Endothelial cell of umbilical vein (primary cell): ENCODE measurements at regions of chr9 and their contacts with region 1.

Region 1: GRCh38 chr9:94783102-94783664 is 56.7 kb downstream of the AOPEP start:
- DNase-seq: peak; percentile 81
- H3K4me3 ChIP-seq: no peak overlapping the region
- H3K27ac ChIP-seq: no peak overlapping the region
- H3K4me1 ChIP-seq: no peaks in the 10 kb centered on the region
- H3K27me3 ChIP-seq: no peaks in the 10 kb centered on the region
- CTCF ChIP-seq: peak; percentile 64 to 65
- POLR2A ChIP-seq: no peak

Region 2: DNA sequence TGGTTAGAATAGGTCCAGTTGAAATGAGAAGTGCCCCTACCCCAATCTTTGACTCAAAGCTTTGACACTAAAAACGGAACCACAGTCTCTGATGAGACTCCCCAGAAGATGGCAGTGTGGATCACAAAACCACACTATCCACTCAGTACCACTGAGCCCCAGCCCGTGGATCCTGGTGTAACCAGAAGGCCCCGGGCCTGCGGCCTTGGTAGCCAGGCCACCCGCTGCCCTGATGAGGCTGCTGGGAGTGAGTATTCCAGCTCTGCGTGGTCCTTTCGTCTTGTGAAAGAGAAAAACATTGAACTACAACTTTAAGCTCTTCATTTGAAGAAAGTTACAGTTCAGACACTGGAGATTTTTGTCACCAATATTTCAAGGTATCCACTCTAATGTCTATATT is 101.7 kb before region 1 on chr9:
- CTCF ChIA-PET with region 1: interaction called, 10 read pairs
- POLR2A ChIA-PET with region 1: no interaction called
- dilution Hi-C with region 1: no loop called
- intact Hi-C with region 1: loop called (anchors 1 kb)
- DNase-seq: peak; percentile 67
- H3K4me3 ChIP-seq: no peak overlapping the region
- H3K27ac ChIP-seq: no peak overlapping the region
- H3K4me1 ChIP-seq: no peaks in the 10 kb centered on the region
- H3K27me3 ChIP-seq: peaks cover 3 to 4% of the 10 kb centered on the region in 2 experiments
- CTCF ChIP-seq: peak; percentile 68 to 74
- POLR2A ChIP-seq: no peak

Region 3: DNA sequence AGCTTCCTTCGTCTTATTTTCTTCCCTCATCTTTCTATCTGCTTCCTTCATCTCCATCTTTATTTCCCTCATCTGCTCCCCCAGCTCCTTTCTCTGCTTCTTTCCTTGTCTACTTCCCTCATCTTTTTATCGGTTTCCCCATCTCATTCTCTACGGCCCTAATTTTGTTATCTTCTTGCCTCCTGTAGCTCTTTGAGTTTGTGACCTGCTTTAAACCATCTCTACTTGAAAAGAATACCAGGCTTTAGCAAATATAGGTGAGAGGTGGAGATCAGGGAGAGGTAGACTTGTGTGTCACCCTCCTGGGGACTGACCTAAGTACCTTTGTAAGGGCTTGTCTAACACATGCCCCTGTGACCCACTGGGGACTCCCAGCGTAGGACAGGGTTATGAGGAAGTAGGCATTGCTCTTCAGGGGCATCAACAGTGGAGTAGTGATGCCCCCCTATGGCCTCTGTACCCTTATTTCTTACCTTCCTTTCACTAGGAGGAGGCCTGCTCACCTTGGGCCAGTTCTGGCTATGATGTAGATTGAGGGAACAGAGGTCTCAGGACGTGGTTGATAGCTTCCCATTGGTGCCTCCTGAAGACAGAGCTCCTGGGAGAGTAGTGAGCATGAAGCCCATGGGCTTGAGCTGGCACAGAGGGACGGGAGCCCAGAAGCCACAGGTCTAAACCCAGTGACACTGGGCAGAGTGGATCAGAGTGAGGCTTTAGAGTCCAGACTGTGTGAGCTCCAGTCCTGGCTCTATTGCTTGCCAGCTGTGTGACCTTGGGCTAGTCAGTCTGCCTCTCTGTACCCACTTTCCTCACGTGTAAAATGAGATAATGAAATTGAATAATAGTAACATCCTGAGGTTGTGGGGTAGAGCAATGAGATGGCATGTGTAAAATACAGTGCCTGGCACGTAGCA is 134.9 kb after region 1 on chr9:
- CTCF ChIA-PET with region 1: interaction called, 5 read pairs
- POLR2A ChIA-PET with region 1: no interaction called
- dilution Hi-C with region 1: no loop called
- intact Hi-C with region 1: loop called (anchors 2 kb)
- DNase-seq: no peak
- H3K4me3 ChIP-seq: no peak overlapping the region
- H3K27ac ChIP-seq: no peak overlapping the region
- H3K4me1 ChIP-seq: peaks cover 40% of the 10 kb centered on the region
- H3K27me3 ChIP-seq: no peaks in the 10 kb centered on the region
- CTCF ChIP-seq: no peak
- POLR2A ChIP-seq: no peak

Region 4: DNA sequence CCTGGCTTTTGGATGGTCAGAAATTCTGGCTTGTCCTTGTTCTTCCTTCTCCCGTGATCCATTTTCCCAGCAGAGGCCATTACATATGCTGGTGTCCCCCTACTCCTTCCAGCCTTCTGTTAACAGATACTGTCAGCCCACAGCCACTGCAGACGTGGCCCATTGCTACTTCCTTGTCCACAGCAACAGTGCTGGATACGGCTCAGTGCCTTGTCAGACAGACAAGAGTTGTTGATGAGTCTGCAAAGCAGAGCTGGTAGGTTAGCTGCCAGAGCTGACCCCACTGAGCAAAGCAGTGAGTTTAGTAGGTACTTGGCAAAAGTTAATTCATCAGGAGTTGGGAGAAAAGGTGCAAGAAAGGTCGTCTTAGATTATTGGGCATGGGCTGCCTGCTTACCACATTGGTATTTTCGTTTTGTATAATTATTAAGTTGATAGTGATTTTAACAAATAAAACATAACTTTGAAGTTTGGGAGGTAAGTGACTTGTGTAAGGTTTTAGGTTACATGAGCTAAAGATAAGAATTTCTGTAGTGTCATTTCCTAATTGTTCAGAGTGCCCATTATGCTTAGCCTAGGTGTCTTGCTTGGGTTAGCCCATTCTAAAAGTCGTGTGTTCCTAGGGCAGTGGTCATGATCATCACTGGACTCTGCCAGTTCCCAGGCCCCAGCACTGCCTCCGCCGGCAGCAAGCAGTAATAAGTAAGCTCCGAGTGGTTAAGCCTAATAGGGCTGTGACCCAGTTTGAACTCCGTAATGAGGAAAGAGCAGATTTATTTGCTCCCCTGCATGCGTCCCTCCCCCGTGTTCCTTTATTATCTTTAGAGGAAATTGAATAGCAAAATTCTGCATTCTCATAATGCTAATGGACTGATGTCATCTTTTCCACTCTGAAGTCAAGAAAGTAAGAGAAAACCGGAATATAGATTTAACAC is 242.3 kb after region 1 on chr9:
- CTCF ChIA-PET with region 1: interaction called, 9 read pairs
- POLR2A ChIA-PET with region 1: no interaction called
- dilution Hi-C with region 1: no loop called
- intact Hi-C with region 1: loop called (anchors 2 kb)
- DNase-seq: peak; percentile 89
- H3K4me3 ChIP-seq: peak overlapping the region in 1 of 3 experiments; percentile 20
- H3K27ac ChIP-seq: peak overlapping the region; percentile 7
- H3K4me1 ChIP-seq: peaks cover 38% of the 10 kb centered on the region
- H3K27me3 ChIP-seq: no peaks in the 10 kb centered on the region
- CTCF ChIP-seq: peak in 1 of 2 donors; percentile 33
- POLR2A ChIP-seq: no peak

Region 5: GRCh38 chr9:95468791-95469190 is 685.6 kb after region 1 on chr9:
- CTCF ChIA-PET with region 1: no interaction called
- POLR2A ChIA-PET with region 1: no interaction called
- dilution Hi-C with region 1: no loop called
- intact Hi-C with region 1: no loop called
- DNase-seq: no peak
- H3K4me3 ChIP-seq: no peak overlapping the region
- H3K27ac ChIP-seq: no peak overlapping the region
- H3K4me1 ChIP-seq: no peaks in the 10 kb centered on the region
- H3K27me3 ChIP-seq: no peaks in the 10 kb centered on the region
- CTCF ChIP-seq: no peak
- POLR2A ChIP-seq: no peak